Colonic mucosa (tissue), 4 donors: ENCODE measurements at regions of chr6 and their contacts with region 1.

Region 1: DNA sequence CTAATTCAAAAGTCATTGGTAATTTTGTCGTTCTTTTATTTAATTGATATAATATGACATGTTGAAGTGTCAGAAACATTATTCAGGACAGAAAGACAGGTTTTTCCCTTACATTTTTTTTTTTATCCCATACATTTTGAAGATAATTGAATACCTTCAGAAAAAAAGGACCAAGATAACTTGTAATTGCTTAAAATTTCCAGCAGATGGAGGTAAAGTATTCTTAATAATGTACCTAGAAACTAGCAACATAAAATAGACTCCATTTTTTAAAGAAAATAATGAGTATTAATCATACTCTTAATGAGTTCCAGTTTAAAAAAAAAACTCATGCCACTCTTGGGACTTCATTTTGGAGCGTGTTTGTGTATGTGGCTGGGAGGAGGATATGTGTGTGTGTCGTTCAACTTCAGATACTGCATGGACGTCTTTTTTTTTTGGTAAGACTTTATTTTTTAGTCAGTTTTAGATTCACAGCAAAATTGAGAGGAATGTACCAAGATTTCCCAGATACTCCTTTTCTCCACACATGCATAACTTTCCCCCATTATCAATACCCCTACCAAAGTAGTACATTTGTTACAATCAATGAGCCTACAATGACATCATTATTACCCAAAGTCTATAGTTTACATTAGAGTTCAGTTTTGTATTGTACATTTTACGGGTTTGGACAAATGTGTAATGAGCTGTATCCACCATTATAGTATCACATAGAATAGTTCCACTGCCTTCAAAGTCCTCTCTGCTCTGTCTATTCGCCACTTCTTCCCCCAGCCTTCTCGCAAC is 79.4 kb downstream of the ROS1 start:
- DNase-seq: no peak
- H3K4me3 ChIP-seq: no peak overlapping the region
- H3K27ac ChIP-seq: no peak overlapping the region
- H3K4me1 ChIP-seq: no peaks in the 10 kb centered on the region
- H3K27me3 ChIP-seq: no peaks in the 10 kb centered on the region
- CTCF ChIP-seq: peak; percentile 32

Region 2: GRCh38 chr6:117265410-117266256 is 80.7 kb before region 1 on chr6 and contains the start of gene VGLL2:
- intact Hi-C with region 1: no loop called
- DNase-seq: peak; percentile 30
- H3K4me3 ChIP-seq: peak within 1 kb of the TSS; percentile 25
- H3K27ac ChIP-seq: no peak within 1 kb of the TSS
- H3K4me1 ChIP-seq: no peaks in the 10 kb centered on the region
- H3K27me3 ChIP-seq: peaks cover 89% of the 10 kb centered on the region
- CTCF ChIP-seq: no peak
- total RNA-seq, gene VGLL2: not detected

Region 3: DNA sequence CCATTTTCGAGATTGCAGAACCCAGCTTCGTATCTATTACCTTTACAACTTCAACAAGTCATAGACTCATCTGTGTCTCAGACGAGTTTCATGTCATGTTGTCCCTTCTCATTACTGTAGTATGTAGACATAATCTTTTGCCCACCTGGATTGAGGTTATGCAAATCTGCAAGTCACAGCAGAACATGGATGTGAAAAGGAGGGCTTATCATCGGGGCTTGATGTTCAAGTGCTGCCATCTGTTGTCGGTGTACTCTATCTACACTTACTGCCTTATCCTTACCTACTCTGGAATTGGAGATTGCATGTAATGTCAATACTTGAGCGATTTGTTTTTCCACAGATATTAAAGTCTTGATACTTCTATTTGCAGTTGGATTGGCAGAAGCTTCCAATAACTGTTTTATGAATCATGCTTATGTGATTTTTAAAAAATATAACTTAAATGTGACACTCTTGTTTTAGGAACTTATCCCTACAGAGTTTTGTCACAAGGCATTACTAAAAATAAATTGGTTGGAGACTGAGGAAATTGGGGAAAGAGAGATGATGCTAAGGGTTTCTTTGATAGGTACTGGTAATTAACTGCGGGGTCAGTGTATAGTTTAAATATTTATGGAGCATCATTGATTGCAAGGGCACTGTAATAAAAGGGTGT is 259.0 kb after region 1 on chr6:
- intact Hi-C with region 1: loop called (anchors 2 kb)
- DNase-seq: peak; percentile 57
- H3K4me3 ChIP-seq: no peak overlapping the region
- H3K27ac ChIP-seq: no peak overlapping the region
- H3K4me1 ChIP-seq: no peaks in the 10 kb centered on the region
- H3K27me3 ChIP-seq: no peaks in the 10 kb centered on the region
- CTCF ChIP-seq: peak; percentile 60